MCF 10A (cell line): ENCODE measurements at regions of chr7 and their contacts with region 1.

Region 1: DNA sequence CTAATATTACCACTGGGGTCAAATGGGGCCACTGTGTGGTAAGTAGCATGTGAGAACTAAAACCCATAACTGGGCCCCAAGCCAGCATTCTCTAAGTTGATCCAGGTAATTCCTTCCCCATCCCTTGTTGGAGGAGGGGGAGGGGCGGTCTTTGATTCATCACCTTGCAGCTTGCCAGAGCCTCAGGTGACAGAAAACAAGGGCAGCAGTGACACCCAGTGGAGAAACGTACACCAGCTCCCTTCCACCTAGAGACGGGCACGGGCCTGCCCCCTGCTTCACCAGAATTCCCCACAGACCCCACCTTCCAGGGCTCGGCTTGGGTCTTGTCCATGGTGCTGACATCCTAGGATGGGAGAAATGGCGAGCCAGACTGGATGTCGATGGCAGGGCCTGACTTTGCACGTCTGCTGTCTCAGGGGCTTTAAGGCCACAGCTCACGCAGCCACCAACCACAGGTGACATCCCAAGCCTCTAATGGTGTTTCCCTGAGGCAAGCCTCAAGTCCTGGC is 102.0 kb downstream of the STRA8 start:
- DNase-seq: peak; percentile 96
- H3K4me3 Mint-ChIP-seq: no peak overlapping the region
- H3K27ac Mint-ChIP-seq: no peak overlapping the region
- H3K4me1 Mint-ChIP-seq: peaks cover 12% of the 10 kb centered on the region
- H3K27me3 Mint-ChIP-seq: no peaks in the 10 kb centered on the region
- CTCF ChIP-seq: peak; percentile 77

Region 2: DNA sequence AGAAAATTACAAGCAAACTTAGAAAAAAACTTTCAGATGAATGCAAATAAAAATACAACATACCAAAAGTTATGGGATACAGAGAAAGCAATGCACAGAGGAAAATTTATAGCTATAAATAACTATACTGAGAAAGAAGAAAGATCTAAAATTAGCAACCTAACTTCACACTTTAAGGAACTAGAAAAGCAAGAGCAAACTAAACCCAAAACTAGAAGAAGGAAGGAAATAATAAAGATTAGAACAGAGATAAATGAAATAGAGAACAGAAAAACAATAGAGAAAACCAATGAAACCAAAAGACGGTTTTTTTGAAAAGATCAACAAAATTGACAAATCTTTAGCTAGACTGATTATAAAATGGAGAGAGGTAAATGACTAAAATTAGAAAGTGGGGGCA is 111.7 kb before region 1 on chr7:
- CTCF ChIA-PET with region 1: no interaction called
- POLR2A ChIA-PET with region 1: no interaction called
- intact Hi-C with region 1: no loop called
- DNase-seq: no peak
- H3K4me3 Mint-ChIP-seq: no peak overlapping the region
- H3K27ac Mint-ChIP-seq: no peak overlapping the region
- H3K4me1 Mint-ChIP-seq: no peaks in the 10 kb centered on the region
- H3K27me3 Mint-ChIP-seq: peaks cover 18% of the 10 kb centered on the region
- CTCF ChIP-seq: no peak

Region 3: GRCh38 chr7:135291809-135292253 is 43.9 kb before region 1 on chr7:
- CTCF ChIA-PET with region 1: interaction called, 27 read pairs
- POLR2A ChIA-PET with region 1: interaction called, 3 read pairs
- intact Hi-C with region 1: no loop called
- DNase-seq: peak; percentile 80
- H3K4me3 Mint-ChIP-seq: no peak overlapping the region
- H3K27ac Mint-ChIP-seq: peak overlapping the region; percentile 83
- H3K4me1 Mint-ChIP-seq: peaks cover 13% of the 10 kb centered on the region
- H3K27me3 Mint-ChIP-seq: no peaks in the 10 kb centered on the region
- CTCF ChIP-seq: no peak

Region 4: GRCh38 chr7:135320277-135320676 is 15.4 kb before region 1 on chr7:
- CTCF ChIA-PET with region 1: interaction called, 27 read pairs
- POLR2A ChIA-PET with region 1: interaction called, 7 read pairs
- intact Hi-C with region 1: no loop called
- DNase-seq: peak; percentile 92
- H3K4me3 Mint-ChIP-seq: no peak overlapping the region
- H3K27ac Mint-ChIP-seq: no peak overlapping the region
- H3K4me1 Mint-ChIP-seq: peaks cover 14% of the 10 kb centered on the region
- H3K27me3 Mint-ChIP-seq: no peaks in the 10 kb centered on the region
- CTCF ChIP-seq: no peak

Region 5: DNA sequence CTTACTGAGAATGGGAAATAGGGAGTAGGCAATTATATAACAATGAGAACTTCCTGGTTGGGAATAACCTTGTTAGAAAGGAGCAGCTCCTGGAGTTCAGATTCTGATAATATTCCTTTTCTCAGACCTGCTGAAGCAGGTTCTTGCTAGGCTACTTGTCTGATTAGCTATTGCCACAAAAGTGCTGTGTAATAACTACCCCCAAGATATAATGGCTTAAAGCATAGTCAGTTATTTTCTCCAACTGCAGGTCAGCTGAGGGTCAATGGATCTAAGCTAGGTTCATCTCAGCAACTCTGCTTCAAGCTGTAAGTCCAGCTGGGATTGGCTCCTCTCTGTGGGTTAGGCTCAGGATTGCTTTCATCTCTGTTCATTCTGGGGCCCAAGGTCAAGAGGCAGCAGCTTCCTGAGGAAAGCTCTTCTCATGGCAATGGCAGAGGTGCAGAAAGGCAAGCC is 183.6 kb after region 1 on chr7:
- CTCF ChIA-PET with region 1: interaction called, 10 read pairs
- POLR2A ChIA-PET with region 1: no interaction called
- intact Hi-C with region 1: no loop called
- DNase-seq: no peak
- H3K4me3 Mint-ChIP-seq: no peak overlapping the region
- H3K27ac Mint-ChIP-seq: no peak overlapping the region
- H3K4me1 Mint-ChIP-seq: no peaks in the 10 kb centered on the region
- H3K27me3 Mint-ChIP-seq: no peaks in the 10 kb centered on the region
- CTCF ChIP-seq: no peak

Region 6: GRCh38 chr7:135558337-135558767 is 222.7 kb after region 1 on chr7:
- CTCF ChIA-PET with region 1: interaction called, 4 read pairs
- POLR2A ChIA-PET with region 1: interaction called, 5 read pairs
- intact Hi-C with region 1: loop called (anchors 1 kb)
- DNase-seq: peak; percentile 85
- H3K4me3 Mint-ChIP-seq: no peak overlapping the region
- H3K27ac Mint-ChIP-seq: no peak overlapping the region
- H3K4me1 Mint-ChIP-seq: peaks cover 9% of the 10 kb centered on the region
- H3K27me3 Mint-ChIP-seq: no peaks in the 10 kb centered on the region
- CTCF ChIP-seq: peak; percentile 41

Region 7: GRCh38 chr7:135645296-135645904 is 309.7 kb after region 1 on chr7:
- CTCF ChIA-PET with region 1: interaction called, 13 read pairs
- POLR2A ChIA-PET with region 1: no interaction called
- intact Hi-C with region 1: no loop called
- DNase-seq: peak; percentile 57
- H3K4me3 Mint-ChIP-seq: no peak overlapping the region
- H3K27ac Mint-ChIP-seq: no peak overlapping the region
- H3K4me1 Mint-ChIP-seq: no peaks in the 10 kb centered on the region
- H3K27me3 Mint-ChIP-seq: no peaks in the 10 kb centered on the region
- CTCF ChIP-seq: peak; percentile 46